SK-N-SH (cell line): ENCODE measurements at regions of chr9 and their contacts with region 1.

Region 1: DNA sequence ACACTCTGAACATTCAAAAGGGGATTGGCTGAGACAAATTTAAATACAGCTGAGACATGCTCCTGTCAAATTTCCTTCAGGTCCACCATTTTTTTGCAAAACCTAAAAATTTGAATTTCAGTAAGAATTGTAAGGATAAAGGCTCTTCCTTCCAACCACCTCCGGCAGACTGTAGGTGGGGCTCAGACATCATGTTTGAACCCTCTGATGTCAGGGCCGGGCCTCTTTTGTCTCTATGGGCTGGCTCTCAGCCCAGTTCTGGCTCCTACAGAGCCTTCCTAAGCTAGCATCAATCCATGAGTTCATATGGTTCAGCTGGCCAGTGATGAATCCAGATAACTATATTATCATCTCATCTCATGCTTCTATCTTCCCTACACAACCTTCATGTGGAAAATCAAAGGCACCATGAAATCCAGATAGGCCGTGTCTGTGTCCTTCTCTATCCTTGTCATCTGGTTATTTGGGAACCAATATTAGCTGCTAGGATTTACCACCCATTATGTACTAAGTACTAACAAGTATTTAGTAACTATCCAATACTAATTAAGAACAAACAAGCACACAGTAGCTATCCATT is 44.2 kb downstream of the NIPSNAP3B start:
- DNase-seq: peak; percentile 62
- H3K4me3 ChIP-seq: no peak overlapping the region
- H3K27ac ChIP-seq: peak overlapping the region in 1 of 2 experiments; percentile 28; a peak in 1 of 4 replicates
- H3K4me1 ChIP-seq: peaks cover 0 to 4% of the 10 kb centered on the region in 2 experiments; a peak in 2 of 4 replicates
- H3K27me3 ChIP-seq: no peaks in the 10 kb centered on the region
- CTCF ChIP-seq: peak; percentile 46
- EP300 ChIP-seq: no peak; a peak in 1 of 4 replicates
- RAD21 ChIP-seq: peak; percentile 81

Region 2: DNA sequence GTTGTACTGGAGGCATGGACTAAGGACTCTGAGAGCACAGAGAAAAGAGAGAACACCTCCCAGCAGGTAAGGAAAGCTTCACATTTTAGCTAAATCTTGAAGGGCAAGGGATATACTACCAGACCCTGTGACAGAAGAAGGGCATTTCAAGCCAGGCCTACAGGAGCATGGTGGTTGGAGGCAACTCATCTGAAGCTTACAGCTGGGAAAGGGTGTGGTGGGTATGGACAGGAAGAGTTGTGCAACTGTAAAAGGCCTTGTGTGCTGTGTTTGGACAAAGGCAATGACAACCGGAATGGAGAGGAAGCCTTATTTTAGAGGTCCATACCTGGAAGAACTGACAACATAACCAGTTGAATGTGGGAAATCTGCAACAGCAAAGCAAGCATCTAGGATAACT is 13.0 kb before region 1 on chr9:
- CTCF ChIA-PET with region 1: interaction called, 12 read pairs
- POLR2A ChIA-PET with region 1: no interaction called
- DNase-seq: no peak
- H3K4me3 ChIP-seq: no peak overlapping the region
- H3K27ac ChIP-seq: no peak overlapping the region
- H3K4me1 ChIP-seq: peaks cover 0 to 43% of the 10 kb centered on the region in 2 experiments; a peak in 2 of 4 replicates
- H3K27me3 ChIP-seq: no peaks in the 10 kb centered on the region
- CTCF ChIP-seq: no peak
- EP300 ChIP-seq: no peak
- RAD21 ChIP-seq: no peak

Region 3: GRCh38 chr9:104872656-104873485 is 64.7 kb after region 1 on chr9:
- CTCF ChIA-PET with region 1: no interaction called
- POLR2A ChIA-PET with region 1: no interaction called
- DNase-seq: peak; percentile 22
- H3K4me3 ChIP-seq: no peak overlapping the region
- H3K27ac ChIP-seq: peak overlapping the region; percentile 65 to 99
- H3K4me1 ChIP-seq: peaks cover 23 to 40% of the 10 kb centered on the region in 2 experiments
- H3K27me3 ChIP-seq: no peaks in the 10 kb centered on the region
- CTCF ChIP-seq: no peak
- EP300 ChIP-seq: peak; percentile 49 to 86; a peak in 2 of 4 replicates
- RAD21 ChIP-seq: no peak

Region 4: GRCh38 chr9:105054501-105054928 is 246.4 kb after region 1 on chr9:
- CTCF ChIA-PET with region 1: no interaction called
- POLR2A ChIA-PET with region 1: no interaction called
- DNase-seq: no peak
- H3K4me3 ChIP-seq: no peak overlapping the region
- H3K27ac ChIP-seq: peak overlapping the region in 1 of 2 experiments; percentile 64; a peak in 2 of 4 replicates
- H3K4me1 ChIP-seq: peaks cover 0 to 5% of the 10 kb centered on the region in 2 experiments; a peak in 1 of 4 replicates
- H3K27me3 ChIP-seq: no peaks in the 10 kb centered on the region
- CTCF ChIP-seq: no peak
- EP300 ChIP-seq: peak in 1 of 2 experiments; percentile 23; a peak in 1 of 4 replicates
- RAD21 ChIP-seq: no peak

Region 5: GRCh38 chr9:105191508-105192121 is 383.5 kb after region 1 on chr9:
- CTCF ChIA-PET with region 1: no interaction called
- POLR2A ChIA-PET with region 1: no interaction called
- DNase-seq: no peak
- H3K4me3 ChIP-seq: no peak overlapping the region
- H3K27ac ChIP-seq: no peak overlapping the region
- H3K4me1 ChIP-seq: 0 out of 4 replicates have a peak, but pooled peaks cover 0 to 5% of the 10 kb centered on the region in 2 experiments
- H3K27me3 ChIP-seq: no peaks in the 10 kb centered on the region
- CTCF ChIP-seq: no peak
- EP300 ChIP-seq: no peak
- RAD21 ChIP-seq: no peak